ENCODE measurements at regions of chr9 and their contacts with region 1.

Region 1: DNA sequence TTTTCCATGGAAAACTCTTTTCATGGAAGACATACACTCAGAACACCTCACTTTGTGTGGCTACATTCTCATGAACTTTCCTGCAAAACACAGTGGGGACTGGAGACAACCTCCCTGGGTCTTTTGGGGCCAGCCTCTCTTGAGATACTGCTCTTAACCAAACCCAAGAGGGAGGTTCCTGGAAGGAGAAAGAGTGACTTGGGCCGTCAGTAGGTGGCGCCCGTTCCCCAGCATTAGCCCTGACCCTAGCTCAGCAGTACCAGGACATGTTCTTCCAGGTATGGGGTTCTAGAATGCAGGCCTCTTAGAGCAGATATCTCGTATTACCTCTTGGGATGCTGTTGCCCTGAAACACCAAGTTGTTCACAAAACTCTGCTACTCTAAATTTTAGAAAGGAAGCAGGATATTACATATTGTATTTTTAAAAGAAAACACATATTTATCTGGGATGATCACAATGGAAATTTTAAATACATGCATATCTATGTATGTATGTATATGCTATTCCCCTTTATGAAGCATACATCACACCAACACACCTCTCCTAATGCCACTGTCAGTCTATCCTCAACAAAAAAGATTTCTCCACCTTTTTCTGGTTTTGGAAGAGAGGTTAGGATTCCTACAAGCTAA is 15.8 kb upstream of the GLIS3 start:
- DNase-seq: no peak
- H3K4me3 ChIP-seq: no peak overlapping the region
- H3K27ac ChIP-seq: no peak overlapping the region
- H3K4me1 ChIP-seq: no peaks in the 10 kb centered on the region
- H3K27me3 ChIP-seq: no peaks in the 10 kb centered on the region
- CTCF ChIP-seq: peak; percentile 56 to 89 (median 82)
- POLR2A ChIP-seq: no peak

Region 2: DNA sequence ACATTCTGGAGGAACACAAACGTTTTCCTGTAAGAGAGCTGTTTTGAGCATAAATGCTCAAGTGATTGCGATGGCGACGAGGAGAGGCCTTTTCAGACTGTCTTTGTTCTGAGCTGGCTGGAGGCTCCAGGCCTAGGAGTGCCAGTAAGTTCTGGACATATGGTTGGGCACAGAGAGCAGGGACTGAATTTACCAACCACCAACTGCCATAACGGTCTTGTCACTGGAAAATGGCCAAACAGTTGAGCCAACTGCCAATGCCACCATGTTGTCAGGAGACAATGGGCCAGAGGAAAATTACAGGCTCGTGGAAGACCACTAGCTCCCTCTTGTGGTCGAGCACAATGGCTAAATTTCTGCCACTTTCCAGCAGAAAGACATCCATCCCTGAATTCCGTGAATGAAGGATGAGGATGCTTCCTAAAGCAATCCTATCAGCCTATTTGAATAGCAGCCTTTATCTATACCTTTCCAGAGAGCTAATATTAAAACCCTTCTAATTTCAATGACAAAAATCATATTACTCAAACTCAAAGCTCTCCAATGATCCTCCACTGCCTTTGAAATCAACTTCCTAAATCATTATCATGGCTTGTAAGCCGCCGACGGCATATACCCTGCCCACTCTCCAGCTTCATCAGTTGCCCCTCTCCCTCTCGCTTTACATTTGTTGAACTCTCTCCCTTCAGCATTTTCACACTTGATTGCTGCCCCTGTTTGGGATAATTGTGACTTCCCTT is 51.1 kb after region 1 on chr9:
- intact Hi-C with region 1: loop called (anchors 10 kb)
- DNase-seq: no peak
- H3K4me3 ChIP-seq: no peak overlapping the region
- H3K27ac ChIP-seq: no peak overlapping the region
- H3K4me1 ChIP-seq: no peaks in the 10 kb centered on the region
- H3K27me3 ChIP-seq: no peaks in the 10 kb centered on the region
- CTCF ChIP-seq: peak; percentile 31 to 82 (median 60)
- POLR2A ChIP-seq: no peak

Measured in esophagus squamous epithelium (tissue), 5 donors.